ENCODE measurements at regions of chr12 and their contacts with region 1.

Region 1: DNA sequence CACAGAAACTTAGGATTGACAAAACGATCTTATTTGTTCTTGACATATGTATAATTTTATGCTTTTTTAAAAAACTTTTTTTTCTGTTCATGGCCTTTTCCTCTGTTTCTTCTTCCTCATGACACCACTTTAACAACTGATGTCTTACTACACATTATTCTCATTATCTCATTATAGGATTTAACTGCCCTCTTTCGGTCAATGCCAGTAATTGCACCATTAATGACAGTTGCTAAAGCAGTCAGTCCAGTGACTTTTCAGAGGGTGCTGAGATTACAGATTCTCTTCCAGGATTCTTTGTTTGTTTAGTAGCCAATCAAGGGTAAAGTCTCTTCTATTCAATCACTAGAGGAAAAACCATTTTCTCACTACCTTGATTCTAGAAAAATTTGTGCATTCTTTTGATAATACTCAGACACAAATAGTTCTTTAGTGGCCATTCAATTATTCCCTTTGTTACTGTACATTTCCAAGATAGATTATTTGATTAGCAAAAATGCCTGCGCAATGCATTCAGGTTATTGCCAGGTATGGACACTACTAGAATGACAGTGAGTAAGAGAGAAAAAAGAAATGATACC is 50.1 kb downstream of the KLRG1 start:
- DNase-seq: peak; percentile 15
- ATAC-seq: no peak
- H3K4me3 ChIP-seq: no peak overlapping the region
- H3K27ac ChIP-seq: no peak overlapping the region
- H3K4me1 ChIP-seq: no peaks in the 10 kb centered on the region
- H3K27me3 ChIP-seq: no peaks in the 10 kb centered on the region; the same call in 1 of the 2 replicates
- CTCF ChIP-seq: peak; percentile 67; the same call in 1 of the 2 replicates

Region 2: GRCh38 chr12:8834230-8834629 is 205.3 kb before region 1 on chr12:
- CTCF ChIA-PET with region 1: no interaction called
- POLR2A ChIA-PET with region 1: no interaction called
- in situ Hi-C with region 1: no loop called
- intact Hi-C with region 1: no loop called
- DNase-seq: no peak
- ATAC-seq: no peak
- H3K4me3 ChIP-seq: no peak overlapping the region
- H3K27ac ChIP-seq: no peak overlapping the region
- H3K4me1 ChIP-seq: no peaks in the 10 kb centered on the region
- H3K27me3 ChIP-seq: no peaks in the 10 kb centered on the region
- CTCF ChIP-seq: no peak

Region 3: GRCh38 chr12:8849876-8850275 is 189.6 kb before region 1 on chr12:
- CTCF ChIA-PET with region 1: no interaction called
- POLR2A ChIA-PET with region 1: no interaction called
- in situ Hi-C with region 1: no loop called
- intact Hi-C with region 1: no loop called
- DNase-seq: no peak
- ATAC-seq: no peak
- H3K4me3 ChIP-seq: no peak overlapping the region
- H3K27ac ChIP-seq: no peak overlapping the region
- H3K4me1 ChIP-seq: no peaks in the 10 kb centered on the region
- H3K27me3 ChIP-seq: no peaks in the 10 kb centered on the region; the same call in 1 of the 2 replicates
- CTCF ChIP-seq: no peak

Region 4: GRCh38 chr12:8949342-8950220 is 89.9 kb before region 1 on chr12 and contains the start of gene M6PR:
- CTCF ChIA-PET with region 1: interaction called, 5 read pairs
- POLR2A ChIA-PET with region 1: interaction called, 4 read pairs
- in situ Hi-C with region 1: no loop called
- intact Hi-C with region 1: loop called (anchors 2 kb)
- DNase-seq: peak; percentile 79
- ATAC-seq: peak; percentile 97
- H3K4me3 ChIP-seq: peak within 1 kb of the TSS; percentile 99 to 100
- H3K27ac ChIP-seq: peak within 1 kb of the TSS; percentile 96
- H3K4me1 ChIP-seq: peaks cover 9% of the 10 kb centered on the region
- H3K27me3 ChIP-seq: no peaks in the 10 kb centered on the region
- CTCF ChIP-seq: peak; percentile 71
- total RNA-seq, gene M6PR: 161 TPM

Region 5: GRCh38 chr12:9024512-9024911 is 15.0 kb before region 1 on chr12:
- CTCF ChIA-PET with region 1: no interaction called
- POLR2A ChIA-PET with region 1: no interaction called
- in situ Hi-C with region 1: no loop called
- intact Hi-C with region 1: no loop called
- DNase-seq: no peak
- ATAC-seq: no peak
- H3K4me3 ChIP-seq: no peak overlapping the region
- H3K27ac ChIP-seq: no peak overlapping the region
- H3K4me1 ChIP-seq: no peaks in the 10 kb centered on the region
- H3K27me3 ChIP-seq: no peaks in the 10 kb centered on the region
- CTCF ChIP-seq: no peak